Dorsolateral prefrontal cortex (tissue), 120 donors: ENCODE measurements at regions of chr5 and their contacts with region 1.

Region 1: DNA sequence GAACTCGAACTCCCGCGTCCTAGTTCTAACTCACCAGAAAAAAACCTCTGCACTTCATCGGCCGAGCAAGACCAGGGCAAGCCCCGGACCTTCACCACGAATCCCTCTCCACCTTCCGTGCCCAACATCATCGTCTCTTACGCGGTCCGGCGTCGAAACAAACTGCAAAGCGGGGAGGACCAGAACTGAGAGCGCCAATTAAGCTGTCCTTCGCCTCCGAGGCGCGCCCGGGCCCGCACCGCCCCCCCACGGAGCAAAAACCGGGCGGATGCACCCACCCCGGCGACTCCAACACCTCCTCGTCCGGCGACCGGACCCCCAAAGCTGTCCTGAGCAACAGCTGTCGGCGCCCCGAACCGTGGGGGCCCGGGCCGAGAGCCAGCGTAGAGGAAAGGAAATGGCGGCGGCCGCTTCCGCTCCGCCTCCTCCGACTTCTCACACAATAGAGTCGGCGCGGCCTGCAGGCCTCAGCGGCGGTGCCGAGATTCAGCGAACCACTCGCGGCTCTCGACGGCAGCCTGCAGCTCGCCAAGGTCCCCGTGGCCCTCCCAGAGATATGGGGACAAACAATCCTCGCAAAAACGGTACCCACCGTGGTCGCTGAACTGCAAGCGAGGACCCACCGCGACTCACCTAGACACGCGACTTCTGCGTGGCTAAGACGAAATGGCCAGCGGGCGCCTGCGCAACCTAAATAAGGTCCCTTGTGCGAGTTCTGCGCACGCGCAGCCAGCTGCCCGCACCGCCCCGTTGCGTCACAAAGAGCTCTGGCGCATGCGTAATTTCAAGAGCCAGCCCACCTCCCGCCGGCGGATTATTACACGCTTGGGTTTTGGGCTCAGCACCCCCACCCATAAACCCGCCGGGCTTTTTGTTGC is at the start of gene HNRNPH1:
- DNase-seq: peak; percentile 96 to 99 (median 97)
- H3K4me3 ChIP-seq: peak within 1 kb of the TSS; percentile 68 to 100 (median 99)
- H3K27ac ChIP-seq: peak within 1 kb of the TSS; percentile 90 to 100 (median 99)
- H3K27me3 ChIP-seq: no peaks in the 10 kb centered on the region
- CTCF ChIP-seq: peak in 23 of 56 donors; percentile 0 to 48 (median 19)
- total RNA-seq, gene HNRNPH1: 242 to 469 (median 329) TPM

Region 2: DNA sequence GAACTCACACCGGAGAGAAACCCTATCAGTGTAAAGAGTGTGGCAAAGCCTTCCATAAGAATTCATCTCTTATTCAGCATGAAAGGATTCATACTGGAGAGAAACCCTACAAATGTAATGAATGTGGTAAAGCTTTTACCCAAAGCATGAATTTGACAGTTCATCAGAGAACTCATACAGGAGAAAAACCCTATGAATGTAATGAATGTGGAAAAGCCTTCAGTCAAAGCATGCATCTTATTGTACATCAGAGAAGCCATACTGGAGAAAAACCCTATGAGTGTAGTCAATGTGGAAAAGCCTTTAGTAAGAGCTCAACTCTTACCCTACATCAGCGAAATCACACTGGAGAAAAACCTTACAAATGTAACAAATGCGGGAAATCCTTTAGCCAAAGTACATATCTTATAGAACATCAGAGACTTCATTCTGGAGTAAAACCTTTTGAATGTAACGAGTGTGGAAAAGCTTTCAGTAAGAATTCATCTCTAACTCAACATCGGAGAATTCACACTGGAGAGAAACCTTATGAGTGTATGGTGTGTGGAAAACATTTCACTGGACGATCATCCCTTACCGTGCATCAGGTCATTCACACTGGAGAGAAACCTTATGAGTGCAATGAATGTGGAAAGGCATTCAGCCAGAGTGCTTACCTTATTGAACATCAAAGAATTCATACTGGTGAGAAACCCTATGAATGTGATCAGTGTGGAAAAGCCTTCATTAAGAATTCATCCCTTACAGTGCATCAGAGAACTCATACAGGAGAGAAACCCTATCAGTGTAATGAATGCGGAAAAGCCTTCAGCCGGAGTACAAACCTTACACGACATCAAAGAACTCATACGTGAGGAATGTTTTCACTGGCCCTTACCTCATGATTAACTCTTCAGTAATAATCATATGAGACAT is 691.1 kb before region 1 on chr5:
- intact Hi-C with region 1: no loop called
- DNase-seq: no peak
- H3K4me3 ChIP-seq: no peak overlapping the region
- H3K27ac ChIP-seq: no peak overlapping the region
- H3K27me3 ChIP-seq: no peaks in the 10 kb centered on the region
- CTCF ChIP-seq: no peak

Region 3: DNA sequence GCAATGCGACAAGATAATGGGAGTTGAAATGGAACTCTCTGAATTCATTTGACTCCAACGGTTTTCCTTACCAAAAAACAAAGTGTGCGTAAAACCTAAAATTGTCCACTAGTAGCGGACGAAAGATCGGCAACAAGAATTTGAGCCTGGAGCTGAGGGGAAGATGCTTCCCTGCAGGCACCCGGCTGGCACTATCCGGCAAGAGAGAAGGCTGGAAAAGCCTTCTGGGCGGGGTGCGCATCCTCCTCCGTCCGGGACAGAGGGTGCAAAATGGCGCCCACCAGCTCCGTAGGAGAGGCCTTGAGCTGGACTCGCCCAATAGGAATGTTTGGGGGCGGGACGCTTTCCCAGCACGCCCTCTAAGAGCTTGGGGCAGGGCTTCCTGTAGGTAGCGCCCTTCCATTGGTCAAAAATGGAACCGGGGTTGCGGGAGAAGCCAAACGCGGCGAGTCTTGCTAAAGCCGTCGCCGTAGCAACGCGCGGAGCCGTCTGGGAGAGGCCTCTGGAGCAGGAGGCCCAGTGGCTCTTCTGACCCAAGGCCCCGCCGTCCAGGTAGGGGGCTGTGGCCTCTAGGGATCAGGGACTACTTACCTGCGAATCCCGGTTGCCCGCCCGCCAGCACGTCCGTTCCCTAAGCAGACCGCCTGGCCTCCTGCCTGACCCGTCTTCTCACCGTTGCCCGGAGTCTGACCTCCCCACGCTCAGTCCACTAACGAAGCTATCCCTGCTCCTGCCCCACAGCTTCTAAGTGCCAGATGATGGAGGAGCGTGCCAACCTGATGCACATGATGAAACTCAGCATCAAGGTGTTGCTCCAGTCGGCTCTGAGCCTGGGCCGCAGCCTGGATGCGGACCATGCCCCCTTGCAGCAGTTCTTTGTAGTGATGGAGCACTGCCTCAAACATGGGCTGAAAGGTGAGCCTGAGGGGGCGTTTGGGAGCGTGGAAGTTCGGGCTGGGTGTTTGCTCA is 63.7 kb before region 1 on chr5:
- intact Hi-C with region 1: loop called (anchors 5 kb)
- DNase-seq: peak; percentile 90 to 99 (median 98)
- H3K4me3 ChIP-seq: peak overlapping the region; percentile 57 to 95 (median 77)
- H3K27ac ChIP-seq: peak overlapping the region; percentile 34 to 95 (median 85)
- H3K27me3 ChIP-seq: no peaks in the 10 kb centered on the region
- CTCF ChIP-seq: peak in 53 of 56 donors; percentile 16 to 72 (median 45)

Region 4: GRCh38 chr5:179678223-179679013 is 55.2 kb after region 1 on chr5:
- intact Hi-C with region 1: loop called in 1 of 2 experiments (anchors 1 kb)
- DNase-seq: peak; percentile 92 to 96 (median 94)
- H3K4me3 ChIP-seq: peak overlapping the region; percentile 70 to 100 (median 92)
- H3K27ac ChIP-seq: peak overlapping the region; percentile 60 to 98 (median 91)
- H3K27me3 ChIP-seq: no peaks in the 10 kb centered on the region
- CTCF ChIP-seq: peak in 35 of 56 donors; percentile 9 to 57 (median 32)

Region 5: GRCh38 chr5:179974946-179975712 is 351.9 kb after region 1 on chr5:
- intact Hi-C with region 1: no loop called
- DNase-seq: peak; percentile 43 to 73 (median 60)
- H3K4me3 ChIP-seq: peak overlapping the region in 14 of 59 donors; percentile 6 to 34 (median 13)
- H3K27ac ChIP-seq: peak overlapping the region in 51 of 59 donors; percentile 7 to 92 (median 59)
- H3K27me3 ChIP-seq: no peaks in the 10 kb centered on the region
- CTCF ChIP-seq: peak in 55 of 56 donors; percentile 25 to 73 (median 51)